Activated CD4-positive, alpha-beta T cell treated with anti-CD3 and anti-CD28 coated beads, Interleukin-2, amount 10 ng/mL, durations not matched to agents 24 days and 14 days (primary cell): ENCODE measurements at regions of chr7 and their contacts with region 1.

Region 1: DNA sequence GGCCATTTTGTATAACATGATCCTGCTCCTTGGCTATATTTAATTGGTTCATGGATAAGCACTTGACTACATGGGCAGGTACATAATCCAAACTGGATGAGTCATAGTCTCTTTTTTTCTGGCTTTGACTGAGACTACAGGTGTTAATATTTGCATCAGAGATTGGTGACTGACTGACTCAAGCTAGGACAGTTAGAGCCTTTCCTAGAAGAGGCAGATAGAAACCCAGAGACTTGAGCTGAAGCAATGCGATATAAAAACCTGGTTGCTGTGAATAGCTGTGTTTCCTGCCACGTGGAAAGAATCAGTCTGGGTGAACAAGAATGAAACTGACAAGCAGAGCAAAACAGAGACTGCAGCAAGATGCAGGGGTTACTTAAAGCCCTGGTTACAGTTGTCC is 81.0 kb downstream of the SAMD9 start:
- DNase-seq: peak; percentile 83
- H3K4me3 Mint-ChIP-seq: no peak overlapping the region
- H3K27ac Mint-ChIP-seq: peak overlapping the region; percentile 74
- H3K4me1 Mint-ChIP-seq: peaks cover 26% of the 10 kb centered on the region
- H3K27me3 Mint-ChIP-seq: no peaks in the 10 kb centered on the region

Region 2: DNA sequence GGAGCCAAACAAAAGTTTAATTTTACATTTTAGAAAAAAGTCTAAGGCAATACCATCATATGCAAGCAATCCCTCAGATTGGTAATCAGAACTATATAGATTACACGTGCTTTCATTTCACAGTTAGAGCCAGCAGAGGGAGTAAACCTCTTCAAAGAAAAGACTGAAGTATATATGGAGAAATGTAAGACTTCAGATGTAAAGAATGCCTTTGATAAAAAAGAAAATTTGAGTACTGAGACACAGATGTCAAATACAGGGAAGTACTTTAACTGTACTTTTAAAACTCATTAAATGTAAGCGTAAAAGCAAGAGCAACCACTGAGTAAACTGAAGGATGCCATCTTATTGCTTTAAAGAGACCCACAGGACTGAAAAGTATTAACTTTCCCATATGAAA is 345.2 kb before region 1 on chr7:
- intact Hi-C with region 1: loop called (anchors 2 kb)
- DNase-seq: peak; percentile 83
- H3K4me3 Mint-ChIP-seq: peak overlapping the region; percentile 56
- H3K27ac Mint-ChIP-seq: peak overlapping the region; percentile 87
- H3K4me1 Mint-ChIP-seq: peaks cover 68% of the 10 kb centered on the region
- H3K27me3 Mint-ChIP-seq: no peaks in the 10 kb centered on the region

Region 3: DNA sequence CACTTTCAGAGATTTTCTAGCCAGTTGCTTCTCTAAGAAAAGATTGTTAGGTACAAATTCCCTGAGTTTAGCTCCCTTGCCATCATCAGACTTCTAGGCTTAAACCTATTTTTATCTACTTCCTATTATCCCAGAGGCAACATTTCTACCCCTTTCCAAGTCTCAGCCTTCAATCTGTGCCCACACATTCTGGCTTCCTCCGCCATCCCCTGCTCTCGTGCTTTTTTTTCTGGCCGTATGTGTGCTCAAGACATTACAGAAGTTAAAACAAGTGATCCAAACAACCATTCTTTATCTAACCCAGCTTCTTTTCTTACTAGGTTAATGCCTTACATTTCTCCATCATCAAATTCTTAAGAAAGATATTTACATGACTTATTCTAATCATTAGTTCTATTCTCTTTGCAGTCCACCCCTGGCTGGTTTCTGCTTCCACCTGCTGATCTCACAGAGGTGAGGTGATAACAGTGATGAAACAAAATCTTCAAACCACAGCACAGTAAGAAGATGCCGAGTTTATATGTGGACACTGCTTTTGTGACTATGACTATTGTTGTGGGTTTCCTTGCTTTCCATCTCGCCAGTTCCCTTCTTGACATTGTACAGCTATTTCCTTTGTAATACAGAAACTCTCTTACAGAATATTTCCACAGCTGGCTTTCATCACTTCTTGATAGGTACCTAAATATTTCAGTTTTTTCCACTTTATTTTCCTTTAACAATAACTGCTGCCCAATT is 182.1 kb before region 1 on chr7:
- intact Hi-C with region 1: loop called (anchors 1 kb)
- DNase-seq: peak; percentile 68
- H3K4me3 Mint-ChIP-seq: peak overlapping the region; percentile 51
- H3K27ac Mint-ChIP-seq: peak overlapping the region; percentile 85
- H3K4me1 Mint-ChIP-seq: peaks cover 16% of the 10 kb centered on the region
- H3K27me3 Mint-ChIP-seq: no peaks in the 10 kb centered on the region

Region 4: GRCh38 chr7:92976931-92977330 is 59.9 kb before region 1 on chr7:
- intact Hi-C with region 1: loop called (anchors 5 kb)
- DNase-seq: no peak
- H3K4me3 Mint-ChIP-seq: no peak overlapping the region
- H3K27ac Mint-ChIP-seq: no peak overlapping the region
- H3K4me1 Mint-ChIP-seq: peaks cover 7% of the 10 kb centered on the region
- H3K27me3 Mint-ChIP-seq: peaks cover 2% of the 10 kb centered on the region

Region 5: DNA sequence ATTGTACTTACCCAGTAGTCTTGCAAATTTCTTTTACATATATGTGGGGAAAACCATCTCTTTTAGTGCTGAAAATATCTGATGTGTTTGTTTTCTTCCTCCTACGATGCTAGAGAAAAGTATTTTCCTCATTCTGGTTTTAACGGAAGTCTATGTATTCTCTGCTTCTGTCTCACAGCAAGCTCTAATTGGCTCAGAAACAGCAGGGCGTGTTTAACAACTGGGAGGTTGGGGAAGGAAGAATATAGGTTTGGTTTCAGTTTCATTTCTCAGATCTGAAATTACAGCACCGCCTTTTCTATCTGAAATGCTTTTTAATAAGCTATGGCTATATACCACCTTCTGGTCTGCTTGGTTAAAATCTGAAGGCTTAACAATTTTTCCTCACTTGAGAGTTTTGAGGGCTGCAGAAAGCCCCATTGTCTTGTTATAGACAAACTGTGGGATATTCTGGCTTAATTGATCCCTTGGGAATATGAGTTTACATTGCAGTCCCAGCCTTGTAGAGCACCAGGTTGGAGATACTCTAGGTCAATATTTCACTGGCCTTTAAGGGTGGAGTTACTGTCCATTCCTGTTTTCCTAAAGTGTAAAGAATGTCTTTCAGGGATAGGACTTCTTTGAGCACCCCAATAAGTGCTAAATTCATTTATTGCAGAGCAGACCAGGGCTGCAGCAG is 81.2 kb after region 1 on chr7 and contains the start of gene SAMD9:
- intact Hi-C with region 1: loop called (anchors 1 kb)
- DNase-seq: peak; percentile 90
- H3K4me3 Mint-ChIP-seq: peak within 1 kb of the TSS; percentile 90
- H3K27ac Mint-ChIP-seq: peak within 1 kb of the TSS; percentile 90
- H3K4me1 Mint-ChIP-seq: peaks cover 54% of the 10 kb centered on the region
- H3K27me3 Mint-ChIP-seq: no peaks in the 10 kb centered on the region
- total RNA-seq, gene SAMD9: 8.6 and 9.4 TPM in 2 replicates

Region 6: GRCh38 chr7:93902777-93903423 is 866.1 kb after region 1 on chr7:
- intact Hi-C with region 1: no loop called
- DNase-seq: peak; percentile 60
- H3K4me3 Mint-ChIP-seq: no peak overlapping the region
- H3K27ac Mint-ChIP-seq: no peak overlapping the region
- H3K4me1 Mint-ChIP-seq: no peaks in the 10 kb centered on the region
- H3K27me3 Mint-ChIP-seq: peaks cover 6% of the 10 kb centered on the region